Aorta (tissue), 5 donors: ENCODE measurements at regions of chr6 and their contacts with region 1.

Region 1: GRCh38 chr6:63685446-63686379 is 50.1 kb downstream of the PHF3 start:
- DNase-seq: no peak
- ATAC-seq: no peak
- H3K4me3 ChIP-seq: no peak overlapping the region
- H3K27ac ChIP-seq: no peak overlapping the region
- H3K4me1 ChIP-seq: no peaks in the 10 kb centered on the region
- H3K27me3 ChIP-seq: no peaks in the 10 kb centered on the region

Region 2: DNA sequence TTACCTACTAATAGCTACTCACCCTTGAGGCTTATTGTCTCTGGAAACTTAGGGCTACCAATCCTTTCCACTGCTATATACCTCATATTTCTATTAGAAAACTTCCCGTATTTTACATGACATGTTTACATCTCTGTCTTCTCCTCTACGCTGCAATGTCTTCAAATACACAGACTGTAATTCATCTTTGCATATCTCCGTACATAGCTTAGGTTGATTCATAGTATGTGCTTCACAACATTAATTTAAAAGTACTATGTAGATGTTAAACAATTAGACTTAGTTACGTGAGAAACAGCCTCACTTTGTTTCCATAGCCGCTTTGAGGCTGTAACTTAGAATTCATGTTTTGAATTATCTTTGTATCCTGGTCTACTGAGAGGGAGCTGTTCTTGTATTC is 509.5 kb before region 1 on chr6:
- intact Hi-C with region 1: loop called in 1 of 2 experiments (anchors 10 kb)
- DNase-seq: no peak
- ATAC-seq: no peak
- H3K4me3 ChIP-seq: no peak overlapping the region
- H3K27ac ChIP-seq: no peak overlapping the region
- H3K4me1 ChIP-seq: no peaks in the 10 kb centered on the region
- H3K27me3 ChIP-seq: no peaks in the 10 kb centered on the region

Region 3: GRCh38 chr6:63389191-63389844 is 296.4 kb before region 1 on chr6:
- intact Hi-C with region 1: no loop called
- DNase-seq: no peak
- ATAC-seq: no peak
- H3K4me3 ChIP-seq: no peak overlapping the region
- H3K27ac ChIP-seq: no peak overlapping the region
- H3K4me1 ChIP-seq: no peaks in the 10 kb centered on the region
- H3K27me3 ChIP-seq: no peaks in the 10 kb centered on the region

Region 4: DNA sequence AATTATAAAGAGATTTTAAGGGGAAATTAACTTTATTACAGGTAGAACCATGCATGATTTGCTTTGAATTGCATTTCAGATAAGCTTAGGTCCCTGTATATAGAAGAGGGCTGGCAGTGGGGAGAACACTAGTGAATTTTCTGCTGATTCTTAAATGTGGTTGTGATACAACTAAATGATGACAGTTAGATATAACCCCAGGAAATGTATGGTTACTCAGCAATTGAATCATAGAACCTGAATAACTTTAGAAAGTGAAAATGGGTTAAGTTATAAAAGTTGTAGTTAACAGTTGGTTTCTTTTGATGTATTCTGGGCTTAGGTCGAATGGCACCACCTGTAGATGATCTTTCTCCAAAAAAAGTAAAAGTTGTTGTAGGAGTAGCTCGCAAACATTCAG is 20.0 kb after region 1 on chr6:
- intact Hi-C with region 1: no loop called
- DNase-seq: no peak
- ATAC-seq: no peak
- H3K4me3 ChIP-seq: no peak overlapping the region
- H3K27ac ChIP-seq: no peak overlapping the region
- H3K4me1 ChIP-seq: no peaks in the 10 kb centered on the region
- H3K27me3 ChIP-seq: no peaks in the 10 kb centered on the region

Region 5: GRCh38 chr6:63750400-63750799 is 64.7 kb after region 1 on chr6:
- intact Hi-C with region 1: no loop called
- DNase-seq: no peak
- ATAC-seq: no peak
- H3K4me3 ChIP-seq: no peak overlapping the region
- H3K27ac ChIP-seq: no peak overlapping the region
- H3K4me1 ChIP-seq: no peaks in the 10 kb centered on the region
- H3K27me3 ChIP-seq: no peaks in the 10 kb centered on the region